CD4-positive, alpha-beta memory T cell (primary cell): ENCODE measurements at regions of chr15 and their contacts with region 1.

Region 1: GRCh38 chr15:90598031-90598577 is 68.4 kb downstream of the CRTC3 start:
- DNase-seq: peak in 1 of 5 donors; percentile 43
- H3K4me3 ChIP-seq: peak overlapping the region in 1 of 2 donors; percentile 21
- H3K4me3 Mint-ChIP-seq: peak overlapping the region; percentile 18 to 86 (median 79)
- H3K27ac ChIP-seq: peak overlapping the region; percentile 62
- H3K27ac Mint-ChIP-seq: peak overlapping the region; percentile 91 to 97 (median 96)
- H3K4me1 ChIP-seq: peaks cover 77% of the 10 kb centered on the region
- H3K4me1 Mint-ChIP-seq: peaks cover 54 to 81% (median 70%) of the 10 kb centered on the region in 4 donors
- H3K27me3 ChIP-seq: no peaks in the 10 kb centered on the region
- H3K27me3 Mint-ChIP-seq: no peaks in the 10 kb centered on the region

Region 2: GRCh38 chr15:90560229-90560776 is 37.8 kb before region 1 on chr15:
- CTCF ChIA-PET with region 1: interaction called, 18 read pairs
- POLR2A ChIA-PET with region 1: interaction called, 14 read pairs
- intact Hi-C with region 1: loop called (anchors 5 kb)
- DNase-seq: no peak
- H3K4me3 ChIP-seq: no peak overlapping the region
- H3K4me3 Mint-ChIP-seq: peak overlapping the region in 2 of 8 donors; percentile 1 to 5
- H3K27ac ChIP-seq: no peak overlapping the region
- H3K27ac Mint-ChIP-seq: peak overlapping the region in 5 of 7 donors; percentile 5 to 89 (median 81)
- H3K4me1 ChIP-seq: peaks cover 76% of the 10 kb centered on the region
- H3K4me1 Mint-ChIP-seq: peaks cover 58 to 88% (median 69%) of the 10 kb centered on the region in 4 donors
- H3K27me3 ChIP-seq: no peaks in the 10 kb centered on the region
- H3K27me3 Mint-ChIP-seq: no peaks in the 10 kb centered on the region

Region 3: GRCh38 chr15:90571063-90571541 is 27.0 kb before region 1 on chr15:
- CTCF ChIA-PET with region 1: interaction called, 7 read pairs
- POLR2A ChIA-PET with region 1: interaction called, 36 read pairs
- intact Hi-C with region 1: loop called (anchors 2 kb)
- DNase-seq: no peak
- H3K4me3 ChIP-seq: no peak overlapping the region
- H3K4me3 Mint-ChIP-seq: peak overlapping the region in 5 of 8 donors; percentile 3 to 56 (median 43)
- H3K27ac ChIP-seq: no peak overlapping the region
- H3K27ac Mint-ChIP-seq: peak overlapping the region in 6 of 7 donors; percentile 4 to 89 (median 43)
- H3K4me1 ChIP-seq: peaks cover 89% of the 10 kb centered on the region
- H3K4me1 Mint-ChIP-seq: peaks cover 45 to 82% (median 61%) of the 10 kb centered on the region in 4 donors
- H3K27me3 ChIP-seq: no peaks in the 10 kb centered on the region
- H3K27me3 Mint-ChIP-seq: no peaks in the 10 kb centered on the region

Region 4: DNA sequence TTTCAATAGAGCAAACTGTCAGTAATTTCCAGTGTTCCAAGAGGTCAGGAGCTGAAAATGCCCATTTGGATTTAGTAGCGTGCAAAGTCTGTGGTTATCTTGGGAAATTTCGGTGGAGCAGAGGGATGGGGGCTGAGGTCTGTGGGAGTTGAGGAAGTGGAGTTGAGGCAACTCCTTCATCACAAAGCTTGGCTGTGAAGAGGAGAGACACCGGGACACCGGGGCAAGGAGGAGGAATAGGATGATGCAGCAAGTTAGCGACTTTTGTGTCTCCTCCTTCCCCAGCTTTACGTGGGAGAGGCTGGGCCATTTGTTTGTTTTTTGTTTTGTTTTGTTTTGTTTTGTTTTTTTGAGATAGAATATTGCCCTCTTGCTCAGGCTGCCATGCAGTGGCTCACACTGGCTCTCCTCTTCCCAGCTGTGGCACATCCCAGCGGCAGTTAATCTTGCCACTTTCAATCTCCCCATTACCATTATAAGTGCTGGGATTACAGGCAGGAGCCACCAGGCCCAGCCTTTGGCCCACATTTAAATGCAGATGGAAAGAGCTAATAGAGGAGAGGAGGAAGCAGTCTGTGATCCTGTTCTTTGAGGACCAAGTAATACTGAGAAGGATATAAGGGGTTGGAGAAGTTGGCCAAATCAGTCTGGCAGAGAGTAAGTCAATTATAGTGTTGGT is 21.3 kb before region 1 on chr15:
- CTCF ChIA-PET with region 1: interaction called, 7 read pairs
- POLR2A ChIA-PET with region 1: interaction called, 36 read pairs
- intact Hi-C with region 1: loop called (anchors 2 kb)
- DNase-seq: no peak
- H3K4me3 ChIP-seq: no peak overlapping the region
- H3K4me3 Mint-ChIP-seq: no peak overlapping the region
- H3K27ac ChIP-seq: no peak overlapping the region
- H3K27ac Mint-ChIP-seq: peak overlapping the region in 6 of 7 donors; percentile 57 to 91 (median 80)
- H3K4me1 ChIP-seq: peaks cover 70% of the 10 kb centered on the region
- H3K4me1 Mint-ChIP-seq: peaks cover 44 to 74% (median 55%) of the 10 kb centered on the region in 4 donors
- H3K27me3 ChIP-seq: no peaks in the 10 kb centered on the region
- H3K27me3 Mint-ChIP-seq: no peaks in the 10 kb centered on the region

Region 5: GRCh38 chr15:90583471-90584252 is 14.4 kb before region 1 on chr15:
- CTCF ChIA-PET with region 1: interaction called, 9 read pairs
- POLR2A ChIA-PET with region 1: interaction called, 21 read pairs
- intact Hi-C with region 1: no loop called
- DNase-seq: no peak
- H3K4me3 ChIP-seq: no peak overlapping the region
- H3K4me3 Mint-ChIP-seq: no peak overlapping the region
- H3K27ac ChIP-seq: no peak overlapping the region
- H3K27ac Mint-ChIP-seq: peak overlapping the region in 5 of 7 donors; percentile 31 to 83 (median 69)
- H3K4me1 ChIP-seq: peaks cover 54% of the 10 kb centered on the region
- H3K4me1 Mint-ChIP-seq: peaks cover 32 to 62% (median 49%) of the 10 kb centered on the region in 4 donors
- H3K27me3 ChIP-seq: no peaks in the 10 kb centered on the region
- H3K27me3 Mint-ChIP-seq: no peaks in the 10 kb centered on the region